Mammary epithelial cell (primary cell): ENCODE measurements at regions of chr5 and their contacts with region 1.

Region 1: DNA sequence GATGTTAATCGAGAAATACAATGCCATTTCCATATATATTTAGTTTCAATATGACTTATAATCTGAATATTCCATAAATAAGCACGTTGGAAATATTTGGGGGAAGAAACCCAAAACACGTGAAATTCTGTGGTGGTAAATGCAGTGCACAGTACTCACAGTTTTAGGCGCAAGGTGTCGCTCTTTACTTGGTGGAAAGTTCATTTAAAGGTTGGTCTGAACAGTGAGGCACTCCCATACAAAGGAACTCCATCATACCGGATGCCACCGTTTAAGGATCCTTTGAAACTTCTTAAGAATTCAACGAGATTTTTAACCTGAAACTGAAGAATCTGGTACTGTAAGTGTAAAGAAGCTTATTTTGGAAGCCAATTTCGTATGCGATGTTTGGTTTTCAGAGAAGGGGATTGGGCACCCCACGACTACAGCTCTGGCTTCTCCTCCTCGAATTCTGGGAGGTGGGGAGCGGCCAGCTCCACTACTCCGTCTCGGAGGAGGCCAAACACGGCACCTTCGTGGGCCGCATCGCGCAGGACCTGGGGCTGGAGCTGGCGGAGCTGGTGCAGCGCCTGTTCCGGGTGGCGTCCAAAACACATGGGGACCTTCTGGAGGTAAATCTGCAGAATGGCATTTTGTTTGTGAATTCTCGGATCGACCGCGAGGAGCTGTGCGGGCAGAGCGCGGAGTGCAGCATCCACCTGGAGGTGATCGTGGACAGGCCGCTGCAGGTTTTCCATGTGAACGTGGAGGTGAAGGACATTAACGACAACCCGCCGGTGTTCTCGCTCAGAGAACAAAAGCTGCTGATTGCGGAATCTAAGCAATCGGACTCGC is at the start of gene PCDHA11:
- DNase-seq: no peak
- H3K4me3 ChIP-seq: peak within 1 kb of the TSS; percentile 41 to 51 (median 43)
- H3K27ac ChIP-seq: no peak within 1 kb of the TSS
- H3K4me1 ChIP-seq: no peaks in the 10 kb centered on the region
- H3K27me3 ChIP-seq: peaks cover 2% of the 10 kb centered on the region
- CTCF ChIP-seq: peak; percentile 48 to 61
- total RNA-seq, gene PCDHA11: 0.21 to 2.0 TPM

Region 2: GRCh38 chr5:140302786-140303639 is 565.9 kb before region 1 on chr5 and contains the start of gene PFDN1:
- CTCF ChIA-PET with region 1: no interaction called
- dilution Hi-C with region 1: no loop called
- in situ Hi-C with region 1: no loop called
- intact Hi-C with region 1: no loop called
- DNase-seq: peak; percentile 92
- H3K4me3 ChIP-seq: peak within 1 kb of the TSS; percentile 89 to 91 (median 91)
- H3K27ac ChIP-seq: peak within 1 kb of the TSS; percentile 91
- H3K4me1 ChIP-seq: peaks cover 21% of the 10 kb centered on the region
- H3K27me3 ChIP-seq: no peaks in the 10 kb centered on the region
- CTCF ChIP-seq: no peak
- total RNA-seq, gene PFDN1: 64.0 to 65.0 TPM

Region 3: DNA sequence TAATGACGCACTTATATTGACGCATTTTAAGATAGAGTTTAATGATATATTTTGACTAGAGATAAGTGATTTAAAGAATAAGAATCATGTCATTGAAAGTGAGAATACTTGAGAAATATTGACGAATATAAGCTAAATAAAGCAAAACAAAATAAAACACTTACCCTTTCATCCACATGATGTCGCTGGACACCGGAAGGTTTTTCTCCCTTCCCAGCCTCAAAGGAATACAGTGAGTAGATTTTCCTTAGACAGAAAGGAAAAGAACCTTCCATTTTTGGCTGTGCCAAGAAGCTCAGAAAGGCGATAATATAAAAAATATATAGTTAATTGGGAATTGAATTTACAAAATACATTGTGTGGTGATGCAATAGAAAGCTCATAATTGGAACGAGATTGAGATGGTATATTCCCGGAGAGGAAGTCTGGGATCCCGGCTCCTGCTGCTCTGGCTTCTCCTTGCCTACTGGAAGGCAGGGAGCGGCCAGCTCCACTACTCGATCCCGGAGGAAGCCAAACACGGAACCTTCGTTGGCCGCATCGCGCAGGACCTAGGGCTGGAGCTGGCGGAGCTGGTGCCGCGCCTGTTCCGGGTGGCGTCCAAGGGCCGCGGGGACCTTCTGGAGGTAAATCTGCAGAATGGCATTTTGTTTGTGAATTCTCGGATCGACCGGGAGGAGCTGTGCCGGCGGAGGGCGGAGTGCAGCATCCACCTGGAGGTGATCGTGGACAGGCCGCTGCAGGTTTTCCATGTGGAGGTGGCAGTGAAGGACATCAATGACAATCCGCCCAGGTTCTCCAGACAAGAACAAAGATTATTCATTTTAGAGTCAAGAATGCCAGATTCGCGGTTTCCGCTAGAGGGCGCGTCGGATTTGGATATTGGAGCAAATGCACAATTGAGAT is 47.3 kb before region 1 on chr5 and contains the start of gene PCDHA5:
- CTCF ChIA-PET with region 1: no interaction called
- dilution Hi-C with region 1: no loop called
- in situ Hi-C with region 1: no loop called
- intact Hi-C with region 1: loop called (anchors 1 kb)
- DNase-seq: no peak
- H3K4me3 ChIP-seq: no peak within 1 kb of the TSS
- H3K27ac ChIP-seq: no peak within 1 kb of the TSS
- H3K4me1 ChIP-seq: no peaks in the 10 kb centered on the region
- H3K27me3 ChIP-seq: no peaks in the 10 kb centered on the region
- CTCF ChIP-seq: peak; percentile 43 to 55
- total RNA-seq, gene PCDHA5: 0.17 to 0.38 TPM

Region 4: DNA sequence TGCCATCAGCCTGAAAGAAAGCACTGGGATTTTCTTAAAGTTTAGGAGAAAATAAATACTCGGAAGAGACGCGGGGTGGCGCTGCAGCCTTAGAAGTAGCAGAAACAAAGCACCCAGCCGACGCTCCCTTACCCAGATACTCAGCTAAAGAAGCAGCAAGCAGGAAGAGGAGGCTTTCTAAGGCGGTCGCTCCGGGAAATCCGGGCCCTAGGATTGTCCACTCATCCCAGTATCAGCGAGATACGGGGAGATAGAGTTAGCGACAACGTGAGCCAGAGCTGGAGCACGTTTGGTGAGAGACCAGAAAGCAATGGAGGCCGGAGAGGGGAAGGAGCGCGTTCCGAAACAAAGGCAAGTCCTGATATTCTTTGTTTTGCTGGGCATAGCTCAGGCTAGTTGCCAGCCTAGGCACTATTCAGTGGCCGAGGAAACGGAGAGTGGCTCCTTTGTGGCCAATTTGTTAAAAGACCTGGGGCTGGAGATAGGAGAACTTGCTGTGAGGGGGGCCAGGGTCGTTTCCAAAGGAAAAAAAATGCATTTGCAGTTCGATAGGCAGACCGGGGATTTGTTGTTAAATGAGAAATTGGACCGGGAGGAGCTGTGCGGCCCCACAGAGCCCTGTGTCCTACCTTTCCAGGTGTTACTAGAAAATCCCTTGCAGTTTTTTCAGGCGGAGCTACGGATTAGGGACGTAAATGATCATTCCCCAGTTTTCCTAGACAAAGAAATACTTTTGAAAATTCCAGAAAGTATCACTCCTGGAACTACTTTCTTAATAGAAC is 225.7 kb after region 1 on chr5 and contains the start of gene PCDHB2:
- CTCF ChIA-PET with region 1: no interaction called
- dilution Hi-C with region 1: no loop called
- in situ Hi-C with region 1: no loop called
- intact Hi-C with region 1: no loop called
- DNase-seq: peak; percentile 71
- H3K4me3 ChIP-seq: peak within 1 kb of the TSS; percentile 58 to 69 (median 59)
- H3K27ac ChIP-seq: peak within 1 kb of the TSS; percentile 32
- H3K4me1 ChIP-seq: no peaks in the 10 kb centered on the region
- H3K27me3 ChIP-seq: no peaks in the 10 kb centered on the region
- CTCF ChIP-seq: peak; percentile 49 to 57
- total RNA-seq, gene PCDHB2: 2.2 to 6.8 TPM

Region 5: DNA sequence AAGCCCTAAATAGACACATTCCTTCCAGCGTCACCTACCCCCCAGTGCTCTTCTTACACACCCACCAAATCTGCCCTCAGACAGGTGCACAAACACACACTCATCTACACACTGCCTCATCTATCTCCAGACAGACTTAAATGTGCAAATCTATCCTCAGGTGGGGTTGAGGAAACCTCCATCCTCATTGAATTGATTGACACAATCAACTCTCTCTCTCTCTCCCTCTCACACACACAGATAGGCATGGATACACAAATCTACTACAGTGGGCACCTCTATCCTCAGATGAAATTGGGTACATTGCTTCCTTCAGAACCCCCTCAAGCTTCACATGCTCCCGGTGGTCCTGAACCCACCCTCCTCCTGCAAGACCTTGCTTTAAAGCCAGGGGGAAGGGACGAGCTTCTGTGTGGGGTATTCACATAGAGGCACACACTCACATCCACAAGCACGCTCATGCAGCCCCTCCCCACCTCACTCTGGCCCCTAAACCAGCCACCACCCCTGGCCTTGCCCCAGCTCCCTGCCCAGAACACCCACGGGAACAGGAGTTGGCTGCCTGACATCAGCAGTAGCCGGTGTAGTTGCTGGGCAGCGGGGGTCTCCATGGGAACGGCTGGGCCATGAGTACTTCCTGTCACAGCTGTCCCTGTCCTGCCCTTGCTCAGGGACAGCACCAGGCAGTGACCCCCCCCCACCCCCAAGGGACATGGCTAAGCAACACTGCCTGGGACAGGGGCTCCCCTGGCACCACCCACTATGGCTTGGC is 986.5 kb after region 1 on chr5:
- CTCF ChIA-PET with region 1: no interaction called
- dilution Hi-C with region 1: no loop called
- in situ Hi-C with region 1: no loop called
- intact Hi-C with region 1: no loop called
- DNase-seq: no peak
- H3K4me3 ChIP-seq: no peak overlapping the region
- H3K27ac ChIP-seq: no peak overlapping the region
- H3K4me1 ChIP-seq: no peaks in the 10 kb centered on the region
- H3K27me3 ChIP-seq: no peaks in the 10 kb centered on the region
- CTCF ChIP-seq: no peak